Calu3 (cell line): ENCODE measurements at regions of chr16 and their contacts with region 1.

Region 1: DNA sequence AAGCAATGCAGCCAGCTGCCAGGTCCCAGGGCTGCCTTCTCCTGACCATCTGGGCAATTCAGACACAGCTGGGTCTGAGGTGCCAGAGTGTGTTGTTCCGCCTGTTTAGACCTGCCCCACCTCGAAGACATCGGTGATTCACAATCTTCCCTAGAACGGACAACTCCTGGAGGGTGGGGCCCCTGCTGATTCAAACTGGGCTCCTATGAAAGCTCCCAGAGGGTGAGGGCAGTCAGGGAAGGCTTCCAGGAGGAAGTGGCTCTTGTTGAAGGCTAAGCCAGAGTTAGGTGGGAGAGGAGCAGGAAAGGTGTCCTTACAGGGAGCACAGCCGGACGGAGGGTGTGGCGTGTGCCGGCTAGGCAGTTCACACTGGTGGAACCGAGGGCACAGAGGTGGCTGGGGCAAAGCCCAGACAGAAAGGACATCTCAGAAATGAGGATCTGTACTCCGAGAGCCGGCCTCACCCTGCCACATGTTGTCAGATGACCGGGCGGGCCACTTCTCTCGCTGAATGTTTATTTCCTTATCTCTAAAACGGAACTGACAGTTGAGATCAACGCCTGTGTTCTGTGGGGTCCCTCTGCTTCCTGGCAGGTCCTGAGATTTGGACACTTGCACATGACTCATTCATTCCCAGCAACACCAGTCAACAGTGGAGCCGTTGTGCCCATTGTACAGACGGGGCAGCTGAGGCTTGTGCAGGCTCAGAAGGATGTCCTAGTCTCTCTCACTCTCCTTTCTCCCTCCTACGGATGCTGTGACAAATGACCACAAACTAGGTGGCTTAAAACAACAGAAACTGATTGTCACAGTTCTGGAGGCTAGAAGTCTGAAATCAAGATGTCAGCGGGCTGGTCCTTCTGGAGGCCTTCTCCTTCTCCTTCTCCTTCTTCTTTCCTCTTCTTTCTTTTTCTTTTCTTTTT is 26.9 kb upstream of the LITAF start:
- DNase-seq: peak; percentile 81
- H3K4me3 Mint-ChIP-seq: peak overlapping the region; percentile 52
- H3K27ac Mint-ChIP-seq: peak overlapping the region; percentile 80
- H3K4me1 Mint-ChIP-seq: peaks cover 82% of the 10 kb centered on the region
- H3K27me3 Mint-ChIP-seq: no peaks in the 10 kb centered on the region
- CTCF ChIP-seq: no peak

Region 2: DNA sequence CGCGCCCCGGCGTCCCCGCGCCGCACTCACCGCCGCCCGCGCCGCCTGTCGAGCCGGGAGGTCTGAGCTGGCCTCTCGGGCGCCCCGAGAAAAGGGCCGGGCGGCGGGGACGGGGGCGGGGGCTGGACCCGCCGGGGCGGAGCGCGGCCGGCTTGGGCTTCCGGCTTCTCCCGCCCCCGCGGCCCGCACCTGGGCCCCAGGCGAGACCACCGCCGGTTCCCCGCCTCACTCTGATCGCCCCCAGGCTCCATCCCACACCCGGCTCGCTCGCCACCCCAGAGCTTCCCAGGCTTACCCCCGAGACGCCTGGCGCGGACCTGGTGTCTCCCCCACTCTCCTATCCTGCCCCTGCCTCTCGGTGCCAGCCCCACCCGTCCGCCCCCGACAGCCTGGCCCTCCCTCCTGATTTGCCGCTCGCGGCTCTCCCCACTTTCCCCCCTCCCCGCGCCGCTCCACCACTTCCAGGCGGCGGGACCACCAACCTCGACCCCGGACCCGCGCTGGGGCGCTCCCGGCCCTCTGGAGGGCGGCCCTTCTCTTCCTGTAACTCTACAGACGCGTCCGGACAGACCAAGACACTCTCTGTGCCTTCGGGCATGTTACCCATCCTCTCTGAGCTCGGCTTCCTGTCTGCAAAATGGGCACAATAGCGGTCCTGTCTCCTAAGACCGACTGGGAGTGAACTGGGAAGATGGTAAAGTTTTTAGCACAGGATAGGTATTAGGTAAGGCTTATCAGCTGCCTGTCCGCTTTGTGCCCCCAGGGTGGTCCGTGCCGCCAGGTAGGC is 26.6 kb before region 1 on chr16 and contains the start of gene LITAF:
- CTCF ChIA-PET with region 1: interaction called, 6 read pairs
- intact Hi-C with region 1: loop called (anchors 2 kb)
- DNase-seq: peak; percentile 80
- H3K4me3 Mint-ChIP-seq: peak within 1 kb of the TSS; percentile 77
- H3K27ac Mint-ChIP-seq: peak within 1 kb of the TSS; percentile 98
- H3K4me1 Mint-ChIP-seq: peaks cover 33% of the 10 kb centered on the region
- H3K27me3 Mint-ChIP-seq: no peaks in the 10 kb centered on the region
- CTCF ChIP-seq: no peak
- total RNA-seq, gene LITAF: 328 and 443 TPM in 2 replicates